ENCODE measurements at regions of chr3 and their contacts with region 1.

Region 1: DNA sequence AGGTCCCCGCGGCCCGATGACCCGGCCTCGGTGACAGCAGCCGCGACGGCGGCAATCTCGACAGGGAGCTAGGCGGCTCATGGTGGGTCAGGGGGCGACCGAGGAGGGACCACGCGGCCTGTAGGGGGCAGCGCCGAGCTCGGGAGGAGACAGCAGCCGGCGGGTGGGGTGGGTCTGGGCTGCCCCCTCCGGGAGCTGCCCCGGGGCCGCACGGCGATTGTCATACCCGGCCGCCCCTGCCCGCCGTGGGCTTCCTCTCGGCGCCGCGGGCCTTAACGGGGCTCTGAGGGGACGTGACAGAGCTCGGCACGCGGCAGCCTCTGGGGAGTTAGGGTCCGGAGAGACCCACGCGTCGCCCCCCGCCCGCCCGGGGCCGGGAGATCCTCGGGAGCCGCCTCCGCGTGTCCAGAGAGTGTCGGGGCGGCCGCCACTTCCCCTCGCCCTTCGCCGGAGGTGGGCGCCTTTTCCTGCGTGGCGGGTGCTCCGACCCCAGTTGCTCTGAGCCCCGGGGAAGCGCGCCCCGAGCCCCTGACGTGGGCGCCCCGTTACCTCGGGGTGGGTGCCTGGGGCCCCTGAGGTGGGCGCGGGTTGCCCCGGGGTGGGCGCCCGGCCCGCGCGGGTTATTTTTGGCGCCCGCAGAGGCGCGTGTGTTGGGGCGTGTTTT is 539 bp upstream of the PLCL2 start:
- DNase-seq: peak; percentile 66 to 78
- ATAC-seq: peak; percentile 47 to 63
- H3K4me3 ChIP-seq: peak overlapping the region; percentile 87 to 93 (median 90)
- H3K27ac ChIP-seq: peak overlapping the region; percentile 93 to 98 (median 96)
- H3K4me1 ChIP-seq: peaks cover 55 to 59% of the 10 kb centered on the region in 2 donors
- H3K27me3 ChIP-seq: no peaks in the 10 kb centered on the region
- CTCF ChIP-seq: peak; percentile 64 to 82 (median 76)
- POLR2A ChIP-seq: peak in 1 of 2 donors; percentile 36

Region 2: GRCh38 chr3:16842272-16843270 is 41.6 kb before region 1 on chr3:
- in situ Hi-C with region 1: no loop called
- intact Hi-C with region 1: loop called (anchors 5 kb)
- DNase-seq: peak; percentile 22 to 52
- ATAC-seq: peak in 1 of 2 donors; percentile 8
- H3K4me3 ChIP-seq: peak overlapping the region; percentile 43 to 51 (median 50)
- H3K27ac ChIP-seq: peak overlapping the region; percentile 73 to 90 (median 79)
- H3K4me1 ChIP-seq: peaks cover 71% of the 10 kb centered on the region in 2 donors
- H3K27me3 ChIP-seq: no peaks in the 10 kb centered on the region
- CTCF ChIP-seq: no peak
- POLR2A ChIP-seq: no peak